MCF 10A (cell line): ENCODE measurements at regions of chr9 and their contacts with region 1.

Region 1: GRCh38 chr9:131739980-131740648 is at the start of gene RAPGEF1:
- DNase-seq: peak; percentile 42
- H3K4me3 Mint-ChIP-seq: peak within 1 kb of the TSS; percentile 85
- H3K27ac Mint-ChIP-seq: peak within 1 kb of the TSS; percentile 82
- H3K4me1 Mint-ChIP-seq: peaks cover 18% of the 10 kb centered on the region
- H3K27me3 Mint-ChIP-seq: no peaks in the 10 kb centered on the region
- CTCF ChIP-seq: peak; percentile 96
- total RNA-seq, gene RAPGEF1: 55.4 and 73.0 TPM in 2 replicates

Region 2: DNA sequence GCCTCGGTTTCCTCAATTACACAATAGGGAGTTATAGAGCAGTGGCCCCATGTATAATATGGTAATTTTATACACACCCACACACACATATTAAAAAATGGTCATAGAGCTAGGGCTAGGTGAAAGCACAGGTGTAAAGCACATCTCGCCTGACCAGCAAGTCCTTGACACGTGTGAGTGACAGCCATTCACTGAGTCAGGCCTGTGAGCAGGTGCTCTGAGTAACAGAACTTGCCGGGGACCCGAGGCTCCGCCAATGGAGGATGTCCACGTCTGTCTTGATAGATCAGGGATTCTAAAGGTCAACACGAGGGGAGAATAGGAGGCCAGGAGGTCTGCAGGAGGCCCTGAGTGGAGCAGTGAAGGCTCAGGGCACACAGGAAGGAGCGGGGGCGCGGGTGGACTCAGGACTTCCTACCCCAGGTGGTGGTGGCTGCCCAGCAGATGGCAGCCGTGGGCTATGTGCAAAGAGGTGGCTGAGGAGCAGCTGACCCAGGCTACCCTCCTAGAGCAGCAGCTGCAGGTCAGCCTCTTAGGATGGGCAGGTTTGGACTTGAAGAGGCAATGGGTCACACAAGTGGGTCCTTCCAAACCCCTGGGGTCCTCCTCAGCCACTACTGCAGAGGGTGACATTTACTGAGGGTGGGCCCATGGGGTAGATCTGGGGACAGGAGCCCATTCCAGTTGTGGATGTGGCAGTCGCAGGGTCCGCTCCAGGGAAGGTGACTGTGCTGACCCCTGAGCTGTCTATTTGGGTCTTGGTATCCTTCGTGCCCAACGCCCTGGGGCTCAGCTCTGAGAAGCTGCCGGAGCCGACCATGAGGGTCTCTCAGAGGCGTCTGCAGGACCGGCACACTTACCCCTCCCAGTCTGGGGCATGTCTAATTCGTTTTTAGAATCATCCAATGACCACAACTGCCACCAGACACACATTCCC is 148.9 kb before region 1 on chr9:
- CTCF ChIA-PET with region 1: interaction called, 151 read pairs
- POLR2A ChIA-PET with region 1: no interaction called
- intact Hi-C with region 1: loop called (anchors 1 kb)
- DNase-seq: peak; percentile 77
- H3K4me3 Mint-ChIP-seq: no peak overlapping the region
- H3K27ac Mint-ChIP-seq: no peak overlapping the region
- H3K4me1 Mint-ChIP-seq: peaks cover 4% of the 10 kb centered on the region
- H3K27me3 Mint-ChIP-seq: no peaks in the 10 kb centered on the region
- CTCF ChIP-seq: peak; percentile 80

Region 3: DNA sequence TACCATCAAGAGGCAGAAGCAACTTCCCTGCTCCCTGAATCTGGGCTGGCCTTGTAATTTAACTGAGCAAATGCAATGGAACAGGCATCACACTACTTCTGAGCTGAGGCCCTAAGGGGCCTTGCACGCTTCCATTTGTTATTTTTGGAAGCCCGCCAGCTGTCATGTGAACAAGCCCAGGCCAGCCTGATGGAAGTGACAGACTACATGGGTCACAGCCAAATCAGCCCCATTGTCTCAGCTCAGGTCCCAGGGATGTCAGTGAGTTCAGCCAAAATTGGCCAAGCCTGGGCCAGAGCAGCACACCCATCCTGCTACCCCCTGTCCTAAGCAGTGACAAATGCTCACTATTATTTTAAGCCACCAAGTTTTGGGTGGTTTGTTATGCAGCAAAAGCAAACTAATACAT is 122.0 kb before region 1 on chr9:
- CTCF ChIA-PET with region 1: interaction called, 13 read pairs
- POLR2A ChIA-PET with region 1: interaction called, 4 read pairs
- intact Hi-C with region 1: no loop called
- DNase-seq: peak; percentile 90
- H3K4me3 Mint-ChIP-seq: no peak overlapping the region
- H3K27ac Mint-ChIP-seq: peak overlapping the region; percentile 73
- H3K4me1 Mint-ChIP-seq: peaks cover 21% of the 10 kb centered on the region
- H3K27me3 Mint-ChIP-seq: no peaks in the 10 kb centered on the region
- CTCF ChIP-seq: no peak

Region 4: GRCh38 chr9:131650254-131650653 is 89.9 kb before region 1 on chr9:
- CTCF ChIA-PET with region 1: interaction called, 4 read pairs
- POLR2A ChIA-PET with region 1: interaction called, 15 read pairs
- intact Hi-C with region 1: no loop called
- DNase-seq: peak; percentile 83
- H3K4me3 Mint-ChIP-seq: peak overlapping the region; percentile 71
- H3K27ac Mint-ChIP-seq: peak overlapping the region; percentile 99
- H3K4me1 Mint-ChIP-seq: peaks cover 26% of the 10 kb centered on the region
- H3K27me3 Mint-ChIP-seq: no peaks in the 10 kb centered on the region
- CTCF ChIP-seq: no peak

Region 5: GRCh38 chr9:131727184-131727759 is 12.8 kb before region 1 on chr9:
- CTCF ChIA-PET with region 1: interaction called, 11 read pairs
- POLR2A ChIA-PET with region 1: interaction called, 11 read pairs
- intact Hi-C with region 1: no loop called
- DNase-seq: peak; percentile 81
- H3K4me3 Mint-ChIP-seq: peak overlapping the region; percentile 24
- H3K27ac Mint-ChIP-seq: peak overlapping the region; percentile 19
- H3K4me1 Mint-ChIP-seq: peaks cover 33% of the 10 kb centered on the region
- H3K27me3 Mint-ChIP-seq: no peaks in the 10 kb centered on the region
- CTCF ChIP-seq: no peak

Region 6: GRCh38 chr9:132789719-132790118 is 1049.6 kb after region 1 on chr9:
- CTCF ChIA-PET with region 1: no interaction called
- POLR2A ChIA-PET with region 1: no interaction called
- intact Hi-C with region 1: no loop called
- DNase-seq: no peak
- H3K4me3 Mint-ChIP-seq: no peak overlapping the region
- H3K27ac Mint-ChIP-seq: no peak overlapping the region
- H3K4me1 Mint-ChIP-seq: no peaks in the 10 kb centered on the region
- H3K27me3 Mint-ChIP-seq: peaks cover 59% of the 10 kb centered on the region
- CTCF ChIP-seq: no peak